Adrenal gland (tissue), 19 donors: ENCODE measurements at regions of chr11 and their contacts with region 1.

Region 1: GRCh38 chr11:63212742-63213141 is 30.7 kb downstream of the SLC22A25 start:
- DNase-seq: peak in 2 of 7 donors; percentile 6 to 9
- H3K4me3 ChIP-seq: no peak overlapping the region
- H3K27ac ChIP-seq: no peak overlapping the region
- H3K4me1 ChIP-seq: no peaks in the 10 kb centered on the region
- H3K27me3 ChIP-seq: no peaks in the 10 kb centered on the region
- CTCF ChIP-seq: peak; percentile 24 to 59 (median 40)
- POLR2A ChIP-seq: no peak

Region 2: GRCh38 chr11:62905927-62906531 is 306.7 kb before region 1 on chr11:
- intact Hi-C with region 1: loop called in 1 of 2 experiments (anchors 10 kb)
- DNase-seq: peak; percentile 66 to 93 (median 78)
- H3K4me3 ChIP-seq: no peak overlapping the region
- H3K27ac ChIP-seq: no peak overlapping the region
- H3K4me1 ChIP-seq: no peaks in the 10 kb centered on the region
- H3K27me3 ChIP-seq: no peaks in the 10 kb centered on the region
- CTCF ChIP-seq: peak; percentile 97 to 99 (median 99)
- POLR2A ChIP-seq: no peak

Region 3: GRCh38 chr11:63032457-63032856 is 180.3 kb before region 1 on chr11:
- intact Hi-C with region 1: loop called (anchors 10 kb)
- DNase-seq: no peak
- H3K4me3 ChIP-seq: no peak overlapping the region
- H3K27ac ChIP-seq: no peak overlapping the region
- H3K4me1 ChIP-seq: no peaks in the 10 kb centered on the region
- H3K27me3 ChIP-seq: peaks cover 3% of the 10 kb centered on the region
- CTCF ChIP-seq: no peak
- POLR2A ChIP-seq: no peak